ENCODE measurements at regions of chr5 and their contacts with region 1.

Region 1: GRCh38 chr5:50962934-50963872 is 296.8 kb downstream of the PARP8 start:
- DNase-seq: peak in 13 of 14 experiments; percentile 23 to 74 (median 42)
- ATAC-seq: peak; percentile 61
- H3K4me3 ChIP-seq: peak overlapping the region; percentile 47
- H3K4me3 Mint-ChIP-seq: peak overlapping the region; percentile 75
- H3K27ac ChIP-seq: no peak overlapping the region
- H3K27ac Mint-ChIP-seq: no peak overlapping the region
- H3K4me1 ChIP-seq: peaks cover 41% of the 10 kb centered on the region
- H3K4me1 Mint-ChIP-seq: peaks cover 43% of the 10 kb centered on the region
- H3K27me3 ChIP-seq: peaks cover 49 to 60% of the 10 kb centered on the region in 2 experiments
- H3K27me3 Mint-ChIP-seq: peaks cover 90% of the 10 kb centered on the region
- CTCF ChIP-seq: peak; percentile 64

Region 2: GRCh38 chr5:52560366-52560765 is 1597.2 kb after region 1 on chr5:
- CTCF ChIA-PET with region 1: no interaction called
- POLR2A ChIA-PET with region 1: no interaction called
- intact Hi-C with region 1: loop called in 1 of 2 experiments (anchors 5 kb)
- DNase-seq: peak in 2 of 14 experiments; percentile 1 to 3
- ATAC-seq: no peak
- H3K4me3 ChIP-seq: no peak overlapping the region
- H3K4me3 Mint-ChIP-seq: no peak overlapping the region
- H3K27ac ChIP-seq: no peak overlapping the region
- H3K27ac Mint-ChIP-seq: no peak overlapping the region
- H3K4me1 ChIP-seq: no peaks in the 10 kb centered on the region
- H3K4me1 Mint-ChIP-seq: no peaks in the 10 kb centered on the region
- H3K27me3 ChIP-seq: no peaks in the 10 kb centered on the region
- H3K27me3 Mint-ChIP-seq: peaks cover 4% of the 10 kb centered on the region
- CTCF ChIP-seq: no peak

Region 3: DNA sequence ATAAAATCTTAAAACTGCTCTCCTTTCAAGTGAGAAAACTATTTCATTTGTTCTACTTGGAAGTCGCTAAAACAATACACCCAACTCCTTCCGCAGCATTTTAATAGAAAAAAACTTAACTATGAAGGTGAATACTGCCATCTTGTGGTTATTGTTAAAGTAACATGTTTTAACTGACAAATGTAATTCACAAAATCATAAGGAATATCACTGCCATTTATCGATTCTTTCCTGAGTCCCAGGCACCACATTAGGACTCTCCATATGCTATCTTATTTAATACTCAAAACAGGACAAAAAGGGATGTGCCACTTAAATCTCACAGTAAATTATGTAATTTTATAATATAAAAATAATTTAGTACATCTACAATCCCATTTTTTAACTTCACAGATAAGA is 1694.0 kb after region 1 on chr5:
- CTCF ChIA-PET with region 1: interaction called, 5 read pairs
- POLR2A ChIA-PET with region 1: no interaction called
- intact Hi-C with region 1: loop called (anchors 1 to 5 kb)
- DNase-seq: peak in 3 of 14 experiments; percentile 59 to 62 (median 62)
- ATAC-seq: peak; percentile 37
- H3K4me3 ChIP-seq: no peak overlapping the region
- H3K4me3 Mint-ChIP-seq: no peak overlapping the region
- H3K27ac ChIP-seq: no peak overlapping the region
- H3K27ac Mint-ChIP-seq: no peak overlapping the region
- H3K4me1 ChIP-seq: no peaks in the 10 kb centered on the region
- H3K4me1 Mint-ChIP-seq: peaks cover 6% of the 10 kb centered on the region
- H3K27me3 ChIP-seq: peaks cover 4 to 11% of the 10 kb centered on the region in 2 experiments
- H3K27me3 Mint-ChIP-seq: peaks cover 29% of the 10 kb centered on the region
- CTCF ChIP-seq: peak; percentile 74